CD4-positive, alpha-beta T cell (primary cell): ENCODE measurements at regions of chr7 and their contacts with region 1.

Region 1: GRCh38 chr7:157474689-157475088 is 137.9 kb downstream of the DNAJB6 start:
- DNase-seq: peak in 1 of 14 experiments; percentile 33
- ATAC-seq: no peak
- H3K4me3 ChIP-seq: no peak overlapping the region
- H3K4me3 Mint-ChIP-seq: no peak overlapping the region
- H3K27ac ChIP-seq: no peak overlapping the region
- H3K27ac Mint-ChIP-seq: peak overlapping the region; percentile 27
- H3K4me1 ChIP-seq: peaks cover 76% of the 10 kb centered on the region
- H3K4me1 Mint-ChIP-seq: peaks cover 65% of the 10 kb centered on the region
- H3K27me3 ChIP-seq: no peaks in the 10 kb centered on the region
- H3K27me3 Mint-ChIP-seq: no peaks in the 10 kb centered on the region
- CTCF ChIP-seq: peak; percentile 28

Region 2: GRCh38 chr7:156793334-156793733 is 681.4 kb before region 1 on chr7:
- CTCF ChIA-PET with region 1: no interaction called
- POLR2A ChIA-PET with region 1: no interaction called
- intact Hi-C with region 1: no loop called
- DNase-seq: no peak
- ATAC-seq: no peak
- H3K4me3 ChIP-seq: no peak overlapping the region
- H3K4me3 Mint-ChIP-seq: no peak overlapping the region
- H3K27ac ChIP-seq: no peak overlapping the region
- H3K27ac Mint-ChIP-seq: no peak overlapping the region
- H3K4me1 ChIP-seq: no peaks in the 10 kb centered on the region
- H3K4me1 Mint-ChIP-seq: no peaks in the 10 kb centered on the region
- H3K27me3 ChIP-seq: no peaks in the 10 kb centered on the region
- H3K27me3 Mint-ChIP-seq: no peaks in the 10 kb centered on the region
- CTCF ChIP-seq: no peak

Region 3: GRCh38 chr7:157423348-157423747 is 51.3 kb before region 1 on chr7:
- CTCF ChIA-PET with region 1: no interaction called
- POLR2A ChIA-PET with region 1: no interaction called
- intact Hi-C with region 1: no loop called
- DNase-seq: no peak
- ATAC-seq: no peak
- H3K4me3 ChIP-seq: no peak overlapping the region
- H3K4me3 Mint-ChIP-seq: no peak overlapping the region
- H3K27ac ChIP-seq: no peak overlapping the region
- H3K27ac Mint-ChIP-seq: no peak overlapping the region
- H3K4me1 ChIP-seq: no peaks in the 10 kb centered on the region
- H3K4me1 Mint-ChIP-seq: no peaks in the 10 kb centered on the region
- H3K27me3 ChIP-seq: no peaks in the 10 kb centered on the region
- H3K27me3 Mint-ChIP-seq: no peaks in the 10 kb centered on the region
- CTCF ChIP-seq: no peak

Region 4: DNA sequence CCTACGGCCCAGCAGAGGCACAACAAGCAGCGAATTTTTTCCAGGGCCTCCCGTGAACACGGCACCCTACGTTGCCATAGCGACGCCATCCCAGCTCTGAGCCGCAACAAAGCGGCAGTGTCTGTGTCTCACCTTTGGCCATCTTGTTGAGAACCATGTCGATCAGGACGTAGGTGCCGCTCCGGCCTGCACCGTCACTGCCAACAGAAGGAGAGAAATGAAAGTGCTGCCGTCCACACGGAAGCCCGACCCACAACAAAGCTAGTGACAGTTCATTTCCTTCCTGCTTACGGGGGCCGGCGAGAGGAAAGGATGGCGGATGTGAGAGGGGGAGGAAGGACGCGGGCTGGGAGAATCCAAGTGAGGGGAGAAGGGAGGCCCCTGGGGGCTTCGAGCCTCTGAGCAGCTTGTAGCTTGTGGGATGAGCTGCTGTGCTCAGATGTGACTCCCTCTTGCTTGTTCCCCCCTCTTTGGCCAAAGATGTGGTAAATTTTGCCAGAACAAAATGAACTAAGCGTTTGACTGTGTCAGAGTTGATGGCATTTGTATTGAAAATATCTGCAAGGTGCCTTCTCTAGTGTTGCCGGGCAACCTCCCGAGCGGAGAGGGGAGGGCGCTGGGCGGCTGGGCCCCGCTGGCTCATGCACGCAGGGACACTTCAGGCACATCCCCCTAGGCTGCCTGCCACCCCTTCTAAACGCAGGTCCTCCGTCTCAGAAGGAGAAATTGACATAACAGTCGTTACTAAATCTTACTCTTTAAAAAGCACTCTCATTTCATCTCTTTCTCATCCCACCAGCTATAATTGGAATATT is 94.3 kb after region 1 on chr7:
- CTCF ChIA-PET with region 1: no interaction called
- POLR2A ChIA-PET with region 1: interaction called, 10 read pairs
- intact Hi-C with region 1: no loop called
- DNase-seq: peak; percentile 41 to 88 (median 57)
- ATAC-seq: peak; percentile 89
- H3K4me3 ChIP-seq: peak overlapping the region; percentile 62
- H3K4me3 Mint-ChIP-seq: peak overlapping the region; percentile 91
- H3K27ac ChIP-seq: no peak overlapping the region
- H3K27ac Mint-ChIP-seq: peak overlapping the region; percentile 62
- H3K4me1 ChIP-seq: peaks cover 24% of the 10 kb centered on the region
- H3K4me1 Mint-ChIP-seq: peaks cover 23% of the 10 kb centered on the region
- H3K27me3 ChIP-seq: no peaks in the 10 kb centered on the region
- H3K27me3 Mint-ChIP-seq: no peaks in the 10 kb centered on the region
- CTCF ChIP-seq: no peak